ENCODE measurements at regions of chr2 and their contacts with region 1.

Region 1: DNA sequence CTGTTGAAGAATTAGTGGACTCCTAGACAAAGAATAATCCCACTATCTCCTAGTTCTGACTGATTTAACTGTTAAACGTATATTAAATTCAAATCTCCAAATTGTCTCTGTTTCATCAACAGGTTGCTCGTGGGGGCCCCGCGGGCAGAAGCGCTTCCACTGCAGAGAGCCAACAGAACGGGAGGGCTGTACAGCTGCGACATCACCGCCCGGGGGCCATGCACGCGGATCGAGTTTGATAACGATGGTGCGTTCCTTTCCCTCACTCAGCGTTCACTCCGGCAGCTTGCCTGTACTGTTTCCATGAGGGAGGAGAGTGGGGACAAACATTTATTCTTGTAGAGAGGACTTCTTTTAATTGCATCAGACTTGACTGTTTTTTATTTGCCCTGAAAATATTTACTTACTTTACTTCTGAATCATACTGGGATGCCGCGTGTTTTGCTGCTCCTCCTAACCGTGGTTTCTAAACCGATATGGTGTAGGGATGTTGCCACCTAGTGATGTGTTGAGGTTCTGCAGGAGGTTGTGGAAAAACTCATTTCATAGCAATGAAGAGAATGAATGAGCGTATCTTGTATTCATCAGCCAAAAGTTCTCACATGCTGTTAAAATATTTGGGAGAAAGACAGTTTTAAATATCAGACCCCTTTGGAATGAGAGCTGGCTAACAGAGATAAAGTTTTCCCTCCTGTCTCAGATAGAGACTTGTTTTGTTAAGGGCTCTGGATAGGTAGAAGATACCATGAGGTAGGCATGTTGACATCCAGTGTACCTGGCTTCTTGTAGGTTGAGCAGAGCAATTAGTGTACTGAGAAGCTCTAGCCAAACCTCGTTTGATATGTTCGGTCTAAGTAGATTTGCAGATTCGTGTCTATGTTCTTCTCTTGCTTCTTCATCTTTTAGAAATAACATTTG is 38.3 kb downstream of the ITGA6 start:
- DNase-seq: peak; percentile 84
- ATAC-seq: no peak
- H3K4me3 Mint-ChIP-seq: no peak overlapping the region
- H3K27ac Mint-ChIP-seq: peak overlapping the region; percentile 60
- H3K4me1 Mint-ChIP-seq: peaks cover 61% of the 10 kb centered on the region
- H3K27me3 Mint-ChIP-seq: no peaks in the 10 kb centered on the region

Region 2: GRCh38 chr2:172131713-172132555 is 333.7 kb before region 1 on chr2:
- CTCF ChIA-PET with region 1: interaction called, 55 read pairs
- POLR2A ChIA-PET with region 1: no interaction called
- DNase-seq: no peak
- ATAC-seq: no peak
- H3K4me3 Mint-ChIP-seq: no peak overlapping the region
- H3K27ac Mint-ChIP-seq: no peak overlapping the region
- H3K4me1 Mint-ChIP-seq: no peaks in the 10 kb centered on the region
- H3K27me3 Mint-ChIP-seq: peaks cover 18% of the 10 kb centered on the region

Region 3: DNA sequence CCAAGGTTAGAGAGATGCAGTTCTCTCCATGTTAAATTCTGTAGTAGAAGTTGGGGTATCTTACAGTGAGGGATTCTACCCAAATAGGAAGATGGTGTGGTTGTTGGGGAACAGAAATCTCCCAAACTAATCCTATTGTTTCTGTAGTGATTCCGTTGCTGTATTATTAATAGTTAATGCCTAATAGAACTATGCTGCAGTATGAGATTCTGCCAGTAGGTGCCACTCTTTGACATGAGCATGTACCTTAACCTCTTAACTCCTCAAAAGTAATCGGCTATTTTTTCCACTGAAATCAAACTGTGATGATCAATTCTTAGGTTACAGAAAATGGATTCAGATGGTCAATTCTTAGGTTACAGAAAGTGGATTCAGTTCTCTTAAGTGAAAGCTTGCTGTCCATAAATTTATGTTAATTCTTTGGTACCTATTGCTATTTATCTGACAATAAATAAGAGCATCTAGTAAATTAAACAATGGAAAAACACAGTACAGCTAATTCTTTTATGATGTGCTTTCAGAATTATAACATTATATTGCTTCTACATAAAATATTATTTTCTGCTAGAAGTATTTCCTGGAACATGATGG is 265.1 kb before region 1 on chr2:
- CTCF ChIA-PET with region 1: interaction called, 24 read pairs
- POLR2A ChIA-PET with region 1: no interaction called
- DNase-seq: peak; percentile 40
- ATAC-seq: no peak
- H3K4me3 Mint-ChIP-seq: no peak overlapping the region
- H3K27ac Mint-ChIP-seq: no peak overlapping the region
- H3K4me1 Mint-ChIP-seq: peaks cover 9% of the 10 kb centered on the region
- H3K27me3 Mint-ChIP-seq: peaks cover 22% of the 10 kb centered on the region

Region 4: DNA sequence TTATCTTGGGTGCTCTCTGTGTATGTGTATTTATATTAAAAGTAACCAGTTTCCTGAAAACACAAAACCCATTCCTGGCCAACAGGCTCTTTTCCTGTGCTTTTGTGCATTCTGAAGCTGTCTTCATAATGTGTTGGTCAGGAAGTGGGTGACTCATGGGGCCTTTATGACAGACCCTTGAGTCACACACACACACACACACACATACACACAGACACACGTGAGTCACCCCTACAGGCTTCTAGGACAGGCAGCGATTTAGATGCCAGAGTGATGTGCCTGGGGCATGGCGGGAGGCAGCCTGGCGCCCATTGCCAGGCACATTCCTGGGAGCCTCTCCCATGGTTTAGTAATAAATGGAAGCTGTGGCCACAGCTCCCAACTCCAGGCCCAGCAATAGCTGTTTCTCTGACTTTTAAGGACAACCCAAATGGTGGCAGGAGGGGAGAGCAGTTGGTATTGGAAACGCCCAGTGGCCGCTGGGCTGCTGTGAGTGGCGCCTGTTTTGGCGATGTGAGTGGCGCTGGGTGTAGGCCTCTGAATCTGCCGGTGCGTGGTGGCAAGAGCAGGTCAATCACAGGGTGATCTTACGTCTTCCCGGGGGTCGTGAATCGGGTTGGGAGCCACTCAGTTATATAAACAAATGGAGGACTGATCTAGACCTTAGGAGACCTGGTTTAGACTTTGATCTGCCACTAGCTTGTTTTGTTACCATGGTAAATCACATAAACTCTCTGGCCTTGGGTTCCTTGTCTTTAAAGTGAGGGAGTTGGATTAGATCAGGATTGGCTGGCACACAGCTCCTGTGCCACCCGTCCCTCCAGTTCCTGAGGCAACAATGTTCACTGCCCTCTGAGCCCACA is 212.3 kb before region 1 on chr2:
- CTCF ChIA-PET with region 1: interaction called, 21 read pairs
- POLR2A ChIA-PET with region 1: no interaction called
- DNase-seq: peak; percentile 80
- ATAC-seq: peak; percentile 90
- H3K4me3 Mint-ChIP-seq: no peak overlapping the region
- H3K27ac Mint-ChIP-seq: peak overlapping the region; percentile 81
- H3K4me1 Mint-ChIP-seq: peaks cover 46% of the 10 kb centered on the region
- H3K27me3 Mint-ChIP-seq: peaks cover 5% of the 10 kb centered on the region

Region 5: GRCh38 chr2:172427256-172427989 is 38.3 kb before region 1 on chr2 and contains the start of gene ITGA6:
- CTCF ChIA-PET with region 1: interaction called, 457 read pairs
- POLR2A ChIA-PET with region 1: interaction called, 4 read pairs
- DNase-seq: peak; percentile 79
- ATAC-seq: peak; percentile 78
- H3K4me3 Mint-ChIP-seq: peak within 1 kb of the TSS; percentile 78
- H3K27ac Mint-ChIP-seq: peak within 1 kb of the TSS; percentile 53
- H3K4me1 Mint-ChIP-seq: peaks cover 30% of the 10 kb centered on the region
- H3K27me3 Mint-ChIP-seq: peaks cover 53% of the 10 kb centered on the region
- total RNA-seq, gene ITGA6: 14.6 to 15.0 TPM

Region 6: DNA sequence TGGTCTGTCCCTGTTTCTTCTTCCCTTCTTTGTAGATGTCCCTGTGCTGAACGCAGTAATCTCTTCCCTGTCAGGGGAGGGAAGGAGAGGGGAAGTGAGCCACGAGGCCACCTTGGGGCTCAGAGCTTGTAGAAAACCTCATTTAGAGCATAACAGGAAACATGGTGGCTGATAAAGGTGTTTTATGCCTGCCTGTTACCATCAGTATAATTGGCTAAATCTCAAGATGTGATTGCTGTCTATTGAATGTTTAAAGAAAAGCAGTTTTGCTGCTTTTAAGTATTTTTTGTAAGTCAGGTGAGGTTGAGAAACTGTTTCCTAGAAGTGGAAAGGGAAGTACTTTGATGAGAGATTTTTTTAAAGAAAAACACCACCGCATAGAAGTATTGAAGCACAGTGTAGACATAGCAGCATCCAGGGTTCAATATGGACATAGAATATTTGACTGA is 30.5 kb after region 1 on chr2:
- CTCF ChIA-PET with region 1: interaction called, 14 read pairs
- POLR2A ChIA-PET with region 1: no interaction called
- DNase-seq: peak; percentile 35
- ATAC-seq: peak; percentile 82
- H3K4me3 Mint-ChIP-seq: peak overlapping the region; percentile 47
- H3K27ac Mint-ChIP-seq: peak overlapping the region; percentile 95
- H3K4me1 Mint-ChIP-seq: peaks cover 29% of the 10 kb centered on the region
- H3K27me3 Mint-ChIP-seq: no peaks in the 10 kb centered on the region

Measured in activated CD8-positive, alpha-beta T cell treated with anti-CD3 and anti-CD28 coated beads, Interleukin-2, amount 10 ng/mL, durations not matched to agents 7 days and 5 days (primary cell).